ENCODE measurements at regions of chr17 and their contacts with region 1.

Region 1: DNA sequence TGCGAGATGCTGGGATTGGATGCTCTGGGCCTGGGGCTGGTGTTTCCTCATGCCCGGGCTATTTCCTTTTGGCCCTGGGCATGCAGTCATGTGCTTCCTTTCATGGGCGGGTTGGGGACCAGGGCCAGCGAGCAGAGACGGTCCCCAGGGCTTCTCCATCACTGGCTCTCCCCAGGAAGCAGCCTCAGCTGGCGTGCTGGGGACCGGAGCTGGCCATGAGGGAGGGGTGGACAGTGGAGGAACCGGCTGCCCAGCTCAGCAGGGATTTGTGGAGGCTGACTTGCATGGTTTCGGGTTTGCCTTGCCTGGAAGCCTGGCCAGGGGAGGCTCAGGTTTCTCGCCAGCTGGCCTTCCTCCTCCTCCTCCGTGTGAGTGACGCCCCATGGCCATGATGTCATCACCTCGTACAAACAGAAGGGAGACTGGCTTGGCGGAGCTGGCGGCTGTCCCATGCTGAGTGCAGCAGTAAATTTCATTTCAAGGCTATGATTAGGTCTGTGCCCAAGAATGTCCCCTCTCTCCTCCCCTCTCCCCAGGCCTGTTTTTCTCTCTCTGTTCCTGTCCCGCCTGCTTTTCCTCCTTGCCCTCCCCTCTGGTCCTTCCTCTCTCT is 8.9 kb upstream of the TIMP2 start:
- DNase-seq: no peak
- ATAC-seq: no peak
- H3K4me3 ChIP-seq: no peak overlapping the region
- H3K27ac ChIP-seq: no peak overlapping the region
- H3K4me1 ChIP-seq: peaks cover 3% of the 10 kb centered on the region; the same call in 1 of the 2 replicates
- H3K27me3 ChIP-seq: no peaks in the 10 kb centered on the region; a peak in 3 of 4 replicates
- CTCF ChIP-seq: no peak
- EP300 ChIP-seq: no peak
- POLR2A ChIP-seq: no peak
- RAD21 ChIP-seq: no peak

Region 2: GRCh38 chr17:78822552-78822951 is 111.5 kb before region 1 on chr17:
- CTCF ChIA-PET with region 1: no interaction called
- POLR2A ChIA-PET with region 1: no interaction called
- RAD21 ChIA-PET with region 1: no interaction called
- SMC1A ChIA-PET with region 1: no interaction called
- in situ Hi-C with region 1: no loop called
- intact Hi-C with region 1: no loop called
- DNase-seq: no peak
- ATAC-seq: no peak
- H3K4me3 ChIP-seq: no peak overlapping the region
- H3K27ac ChIP-seq: no peak overlapping the region
- H3K4me1 ChIP-seq: no peaks in the 10 kb centered on the region
- H3K27me3 ChIP-seq: no peaks in the 10 kb centered on the region
- CTCF ChIP-seq: no peak
- EP300 ChIP-seq: no peak
- POLR2A ChIP-seq: no peak
- RAD21 ChIP-seq: no peak

Region 3: GRCh38 chr17:78899361-78900260 is 34.5 kb before region 1 on chr17:
- CTCF ChIA-PET with region 1: no interaction called
- POLR2A ChIA-PET with region 1: no interaction called
- RAD21 ChIA-PET with region 1: no interaction called
- SMC1A ChIA-PET with region 1: no interaction called
- in situ Hi-C with region 1: no loop called
- intact Hi-C with region 1: no loop called
- DNase-seq: no peak
- ATAC-seq: no peak
- H3K4me3 ChIP-seq: no peak overlapping the region
- H3K27ac ChIP-seq: no peak overlapping the region
- H3K4me1 ChIP-seq: no peaks in the 10 kb centered on the region
- H3K27me3 ChIP-seq: 0 out of 4 replicates have a peak, but pooled peaks cover 0 to 4% of the 10 kb centered on the region in 2 experiments
- CTCF ChIP-seq: no peak
- EP300 ChIP-seq: no peak
- POLR2A ChIP-seq: no peak
- RAD21 ChIP-seq: no peak

Region 4: GRCh38 chr17:78915872-78916632 is 18.0 kb before region 1 on chr17:
- CTCF ChIA-PET with region 1: no interaction called
- POLR2A ChIA-PET with region 1: interaction called, 12 read pairs
- RAD21 ChIA-PET with region 1: no interaction called
- SMC1A ChIA-PET with region 1: no interaction called
- in situ Hi-C with region 1: no loop called
- intact Hi-C with region 1: no loop called
- DNase-seq: no peak
- ATAC-seq: no peak
- H3K4me3 ChIP-seq: no peak overlapping the region
- H3K27ac ChIP-seq: no peak overlapping the region
- H3K4me1 ChIP-seq: no peaks in the 10 kb centered on the region
- H3K27me3 ChIP-seq: no peaks in the 10 kb centered on the region; a peak in 3 of 4 replicates
- CTCF ChIP-seq: no peak
- EP300 ChIP-seq: no peak
- POLR2A ChIP-seq: no peak
- RAD21 ChIP-seq: no peak